ENCODE measurements at regions of chr4 and their contacts with region 1.

Region 1: GRCh38 chr4:1740021-1740545 is 18.8 kb downstream of the TACC3 start:
- DNase-seq: no peak
- ATAC-seq: no peak
- H3K4me3 ChIP-seq: no peak overlapping the region
- H3K27ac ChIP-seq: no peak overlapping the region
- H3K4me1 ChIP-seq: peaks cover 0 to 24% of the 10 kb centered on the region in 2 experiments; a peak in 2 of 5 replicates
- H3K27me3 ChIP-seq: no peaks in the 10 kb centered on the region
- CTCF ChIP-seq: no peak
- EP300 ChIP-seq: no peak
- POLR2A ChIP-seq: no peak
- RAD21 ChIP-seq: no peak

Region 2: GRCh38 chr4:1887052-1887451 is 147.0 kb after region 1 on chr4:
- CTCF ChIA-PET with region 1: no interaction called
- POLR2A ChIA-PET with region 1: interaction called, 3 read pairs
- in situ Hi-C with region 1: loop called (anchors 5 kb)
- intact Hi-C with region 1: no loop called
- DNase-seq: no peak
- ATAC-seq: no peak
- H3K4me3 ChIP-seq: no peak overlapping the region
- H3K27ac ChIP-seq: peak overlapping the region; percentile 57; the same call in 1 of the 3 replicates
- H3K4me1 ChIP-seq: peaks cover 33 to 52% of the 10 kb centered on the region in 2 experiments
- H3K27me3 ChIP-seq: no peaks in the 10 kb centered on the region
- CTCF ChIP-seq: no peak
- EP300 ChIP-seq: no peak
- POLR2A ChIP-seq: no peak
- RAD21 ChIP-seq: no peak